Caco-2 (cell line): ENCODE measurements at regions of chr13 and their contacts with region 1.

Region 1: GRCh38 chr13:108947551-108948030 is 318.2 kb downstream of the MYO16 start:
- DNase-seq: no peak
- H3K4me3 ChIP-seq: no peak overlapping the region
- H3K4me3 Mint-ChIP-seq: no peak overlapping the region
- H3K27ac Mint-ChIP-seq: no peak overlapping the region
- H3K4me1 ChIP-seq: peaks cover 23% of the 10 kb centered on the region
- H3K4me1 Mint-ChIP-seq: peaks cover 32% of the 10 kb centered on the region
- H3K27me3 ChIP-seq: no peaks in the 10 kb centered on the region
- H3K27me3 Mint-ChIP-seq: no peaks in the 10 kb centered on the region
- CTCF ChIP-seq: no peak

Region 2: DNA sequence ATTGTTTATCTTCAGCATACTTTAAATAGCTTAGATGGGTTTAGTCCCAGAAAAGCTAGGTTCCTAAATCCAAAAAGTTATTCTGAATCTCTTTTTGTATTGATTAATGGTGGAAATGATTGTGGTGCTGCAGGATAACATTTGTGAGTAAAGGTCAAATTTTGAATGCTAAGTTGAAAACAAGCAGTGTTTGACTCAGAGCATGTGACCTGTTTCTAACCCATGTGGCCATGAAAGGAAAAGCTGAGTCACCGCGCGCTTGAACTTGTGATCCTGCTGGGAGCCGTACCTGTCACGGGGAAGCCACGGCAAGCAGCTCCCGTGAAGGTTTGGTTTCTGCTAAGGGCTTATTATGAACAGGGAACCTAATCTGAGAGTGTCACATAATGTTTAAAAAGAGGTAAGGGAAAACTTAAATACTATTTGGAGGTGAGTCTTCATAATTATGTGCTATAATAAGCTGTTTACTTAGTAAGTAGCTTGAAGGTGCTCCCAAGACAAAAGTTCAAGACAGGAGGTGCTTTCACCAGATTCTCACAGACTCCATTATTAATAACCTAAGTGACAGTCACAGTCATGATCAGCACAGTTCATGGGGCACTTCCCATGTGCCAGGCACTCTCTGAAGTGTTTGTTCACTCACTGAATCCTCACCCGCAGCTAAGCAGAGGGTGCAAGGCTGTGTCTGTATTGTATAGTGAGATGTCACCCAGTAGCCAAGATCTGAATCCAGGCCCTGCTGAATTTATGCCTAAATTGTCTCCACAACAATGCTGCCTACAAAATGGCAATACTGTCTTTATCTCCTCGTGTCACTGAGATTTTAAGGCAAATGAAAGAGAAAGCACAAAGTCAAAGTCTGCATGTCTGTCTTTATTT is 31.7 kb before region 1 on chr13:
- CTCF ChIA-PET with region 1: no interaction called
- POLR2A ChIA-PET with region 1: no interaction called
- intact Hi-C with region 1: loop called (anchors 2 kb)
- DNase-seq: peak; percentile 73 to 82
- H3K4me3 ChIP-seq: no peak overlapping the region
- H3K4me3 Mint-ChIP-seq: peak overlapping the region; percentile 25
- H3K27ac Mint-ChIP-seq: peak overlapping the region; percentile 53
- H3K4me1 ChIP-seq: peaks cover 11% of the 10 kb centered on the region
- H3K4me1 Mint-ChIP-seq: peaks cover 20% of the 10 kb centered on the region
- H3K27me3 ChIP-seq: no peaks in the 10 kb centered on the region
- H3K27me3 Mint-ChIP-seq: peaks cover 10% of the 10 kb centered on the region
- CTCF ChIP-seq: no peak

Region 3: DNA sequence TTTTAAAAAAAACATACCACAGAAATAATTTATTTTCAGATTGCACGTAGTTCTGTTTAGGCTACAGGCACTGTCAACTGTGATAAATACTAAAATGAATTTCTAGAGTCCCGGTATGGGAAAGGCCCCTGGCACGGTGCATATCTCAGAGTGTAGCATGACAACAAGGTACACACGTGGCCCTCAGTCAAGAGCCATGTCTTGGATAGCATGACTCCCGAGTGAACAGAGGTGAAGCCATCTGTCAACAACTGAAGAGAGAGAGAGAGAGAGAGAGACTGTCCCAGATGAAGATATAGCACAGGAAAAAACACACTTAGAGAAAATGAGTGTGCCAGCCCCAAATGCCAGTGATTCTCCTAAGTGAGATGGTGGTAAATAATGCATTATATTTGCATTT is 20.7 kb before region 1 on chr13:
- CTCF ChIA-PET with region 1: no interaction called
- POLR2A ChIA-PET with region 1: no interaction called
- intact Hi-C with region 1: no loop called
- DNase-seq: no peak
- H3K4me3 ChIP-seq: no peak overlapping the region
- H3K4me3 Mint-ChIP-seq: no peak overlapping the region
- H3K27ac Mint-ChIP-seq: no peak overlapping the region
- H3K4me1 ChIP-seq: no peaks in the 10 kb centered on the region
- H3K4me1 Mint-ChIP-seq: no peaks in the 10 kb centered on the region
- H3K27me3 ChIP-seq: no peaks in the 10 kb centered on the region; the same call in 1 of the 2 replicates
- H3K27me3 Mint-ChIP-seq: peaks cover 4% of the 10 kb centered on the region
- CTCF ChIP-seq: no peak